ENCODE measurements at regions of chr3 and their contacts with region 1.

Region 1: DNA sequence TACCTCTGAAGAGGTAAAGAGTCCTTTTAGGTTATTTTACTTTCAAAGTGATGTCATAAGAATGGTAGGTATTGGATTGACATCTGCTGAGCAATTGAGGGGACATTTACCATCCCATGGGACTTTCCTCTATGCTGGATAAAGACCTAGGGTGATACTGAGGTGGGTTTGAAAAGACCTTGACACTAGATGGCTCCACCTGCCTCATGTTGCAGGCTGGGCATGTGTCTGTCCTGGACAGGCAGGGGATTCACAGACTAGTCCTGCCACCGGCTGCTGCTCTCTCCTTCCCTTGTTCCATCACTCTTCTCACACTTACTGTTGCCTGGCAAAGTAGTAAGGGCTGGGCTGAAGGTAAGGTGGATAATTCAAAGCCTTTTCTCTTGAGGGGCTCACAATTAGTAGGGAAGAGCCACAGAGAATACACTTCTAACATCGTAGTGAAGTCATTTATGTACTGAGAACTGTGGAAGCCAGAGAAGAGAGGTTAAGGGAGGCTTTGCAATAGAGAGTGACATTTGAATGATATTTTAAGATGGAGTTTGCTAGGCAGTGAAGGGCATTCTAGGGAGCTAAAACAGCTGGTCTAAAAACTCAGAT is 27.7 kb downstream of the TRAK1 start:
- DNase-seq: peak; percentile 71
- ATAC-seq: peak; percentile 89
- H3K4me3 ChIP-seq: no peak overlapping the region
- H3K27ac ChIP-seq: peak overlapping the region; percentile 71
- H3K4me1 ChIP-seq: peaks cover 48% of the 10 kb centered on the region
- H3K27me3 ChIP-seq: no peaks in the 10 kb centered on the region
- CTCF ChIP-seq: peak; percentile 54 to 93 (median 75); a peak in 5 of 6 replicates
- EP300 ChIP-seq: no peak
- POLR2A ChIP-seq: no peak
- RAD21 ChIP-seq: peak; percentile 86

Region 2: DNA sequence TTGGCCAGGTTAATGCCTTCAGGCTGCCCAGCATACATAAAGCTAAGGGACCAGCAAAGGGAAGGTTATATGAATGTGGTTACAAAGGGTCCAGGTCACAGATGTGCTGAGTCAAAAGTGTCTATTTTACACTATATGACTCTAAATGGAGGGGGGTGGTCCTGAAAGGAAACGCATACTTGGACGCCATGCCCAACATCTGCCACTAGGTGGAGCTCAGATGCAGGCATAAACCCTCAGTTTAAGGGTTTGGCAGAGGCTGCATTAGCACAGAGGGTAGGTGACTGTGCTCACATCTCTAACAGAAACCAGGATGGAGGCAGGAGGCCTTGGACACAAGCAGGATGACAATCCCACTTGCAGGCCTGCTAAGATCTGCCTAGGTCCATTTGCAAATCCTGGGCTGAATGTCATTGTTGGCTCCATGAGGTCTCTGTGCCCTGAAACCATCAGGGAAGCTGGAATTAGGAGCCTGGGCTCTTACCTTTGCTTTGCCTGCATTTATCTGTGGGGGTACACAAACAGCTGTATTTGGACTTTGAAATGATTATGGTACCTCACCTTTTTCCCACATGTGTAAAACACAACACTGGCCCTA is 1538.3 kb before region 1 on chr3:
- CTCF ChIA-PET with region 1: no interaction called
- POLR2A ChIA-PET with region 1: no interaction called
- RAD21 ChIA-PET with region 1: no interaction called
- SMC1A ChIA-PET with region 1: no interaction called
- in situ Hi-C with region 1: loop called (anchors 25 kb)
- intact Hi-C with region 1: no loop called
- DNase-seq: no peak
- ATAC-seq: peak; percentile 85
- H3K4me3 ChIP-seq: no peak overlapping the region
- H3K27ac ChIP-seq: no peak overlapping the region
- H3K4me1 ChIP-seq: no peaks in the 10 kb centered on the region
- H3K27me3 ChIP-seq: no peaks in the 10 kb centered on the region; a peak in 2 of 4 replicates
- CTCF ChIP-seq: peak; percentile 91 to 96 (median 93); a peak in 5 of 6 replicates
- EP300 ChIP-seq: no peak
- POLR2A ChIP-seq: no peak
- RAD21 ChIP-seq: peak; percentile 99

Region 3: DNA sequence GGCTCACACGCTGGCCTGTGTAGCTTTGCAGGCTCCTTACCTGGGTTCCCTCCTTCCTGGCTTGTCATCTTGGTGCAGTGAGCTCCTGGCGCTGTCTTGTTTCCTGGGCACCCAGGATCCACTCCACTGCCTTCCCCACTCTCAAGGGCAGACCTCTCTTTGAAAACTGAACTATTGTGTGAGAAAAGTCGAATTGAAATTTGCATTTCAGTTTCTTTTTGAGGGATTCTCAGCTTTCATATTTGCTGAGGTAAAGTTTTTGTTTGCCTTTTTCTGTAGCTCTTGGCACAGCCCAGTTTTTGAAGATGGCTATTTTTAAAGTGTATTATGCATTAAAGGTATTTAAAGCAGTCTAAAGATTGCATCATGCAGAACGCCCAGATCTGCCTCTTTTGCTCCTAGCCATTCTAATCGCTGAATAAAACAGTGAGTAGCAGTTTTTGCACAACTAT is 77.0 kb after region 1 on chr3:
- CTCF ChIA-PET with region 1: interaction called, 159 read pairs
- POLR2A ChIA-PET with region 1: interaction called, 5 read pairs
- RAD21 ChIA-PET with region 1: interaction called, 64 read pairs
- SMC1A ChIA-PET with region 1: interaction called, 105 read pairs
- in situ Hi-C with region 1: no loop called
- intact Hi-C with region 1: loop called (anchors 1 kb)
- DNase-seq: peak; percentile 95
- ATAC-seq: peak; percentile 80
- H3K4me3 ChIP-seq: peak overlapping the region; percentile 64
- H3K27ac ChIP-seq: peak overlapping the region; percentile 90
- H3K4me1 ChIP-seq: peaks cover 66% of the 10 kb centered on the region
- H3K27me3 ChIP-seq: no peaks in the 10 kb centered on the region
- CTCF ChIP-seq: no peak
- EP300 ChIP-seq: no peak; a peak in 1 of 4 replicates
- POLR2A ChIP-seq: peak; percentile 69; the same call in 1 of the 2 replicates
- RAD21 ChIP-seq: no peak

Region 4: DNA sequence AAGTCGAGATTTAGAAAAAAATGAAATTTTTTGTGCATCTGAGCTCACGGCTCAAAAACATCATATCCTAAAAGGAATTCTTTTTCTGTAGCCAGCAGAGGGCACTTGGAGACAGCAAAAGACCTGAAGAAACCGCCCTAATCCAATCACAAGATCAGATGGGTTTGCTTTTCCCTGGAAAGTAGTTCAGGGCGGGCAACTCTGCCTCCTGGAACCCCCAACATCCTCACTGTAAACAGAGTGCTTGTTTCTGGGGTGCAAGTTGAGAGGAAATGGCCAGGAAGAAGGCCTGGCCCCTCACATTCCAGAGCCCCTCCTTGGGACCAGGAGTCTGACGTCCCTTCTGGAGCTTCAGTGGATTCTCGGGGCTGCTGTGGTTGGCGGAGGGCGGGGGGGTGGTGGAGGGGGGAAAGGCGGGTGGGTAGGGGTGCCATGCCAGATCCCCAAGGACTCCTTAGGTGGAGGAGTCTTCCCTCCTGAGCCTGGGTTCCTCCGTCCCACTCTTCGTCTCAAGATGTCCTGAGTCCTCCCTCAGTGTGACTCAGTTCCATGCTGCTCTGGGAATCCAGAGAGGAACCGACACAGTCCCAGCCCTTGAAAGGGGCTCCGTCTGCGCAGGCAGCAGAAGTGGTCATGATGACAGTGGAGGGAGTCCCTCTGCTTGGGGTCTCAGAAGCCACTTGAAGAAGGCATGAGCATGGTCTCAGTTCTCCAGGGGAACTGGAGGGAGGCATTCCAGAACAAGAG is 111.3 kb after region 1 on chr3:
- CTCF ChIA-PET with region 1: interaction called, 15 read pairs
- POLR2A ChIA-PET with region 1: interaction called, 4 read pairs
- RAD21 ChIA-PET with region 1: interaction called, 7 read pairs
- SMC1A ChIA-PET with region 1: interaction called, 7 read pairs
- in situ Hi-C with region 1: loop called (anchors 5 kb)
- intact Hi-C with region 1: loop called (anchors 1 kb)
- DNase-seq: no peak
- ATAC-seq: no peak
- H3K4me3 ChIP-seq: no peak overlapping the region
- H3K27ac ChIP-seq: no peak overlapping the region
- H3K4me1 ChIP-seq: peaks cover 3% of the 10 kb centered on the region; the same call in 1 of the 2 replicates
- H3K27me3 ChIP-seq: no peaks in the 10 kb centered on the region
- CTCF ChIP-seq: peak in 2 of 3 experiments; percentile 19 to 30; a peak in 3 of 6 replicates
- EP300 ChIP-seq: no peak
- POLR2A ChIP-seq: no peak
- RAD21 ChIP-seq: peak; percentile 53